ENCODE measurements at regions of chr1 and their contacts with region 1.

Region 1: GRCh38 chr1:45011837-45012638 is at the start of gene UROD:
- DNase-seq: peak; percentile 94
- H3K4me3 Mint-ChIP-seq: peak within 1 kb of the TSS; percentile 79
- H3K27ac Mint-ChIP-seq: peak within 1 kb of the TSS; percentile 92
- H3K4me1 Mint-ChIP-seq: peaks cover 43% of the 10 kb centered on the region
- H3K27me3 Mint-ChIP-seq: no peaks in the 10 kb centered on the region
- total RNA-seq, gene UROD: 66.4 to 70.7 TPM

Region 2: GRCh38 chr1:44985747-44986359 is 26.2 kb before region 1 on chr1:
- CTCF ChIA-PET with region 1: interaction called, 10 read pairs
- POLR2A ChIA-PET with region 1: interaction called, 11 read pairs
- DNase-seq: no peak
- H3K4me3 Mint-ChIP-seq: peak overlapping the region; percentile 97
- H3K27ac Mint-ChIP-seq: peak overlapping the region; percentile 92
- H3K4me1 Mint-ChIP-seq: peaks cover 28% of the 10 kb centered on the region
- H3K27me3 Mint-ChIP-seq: no peaks in the 10 kb centered on the region

Region 3: GRCh38 chr1:45490626-45491486 is 478.8 kb after region 1 on chr1 and contains the start of gene TESK2:
- CTCF ChIA-PET with region 1: interaction called, 18 read pairs
- POLR2A ChIA-PET with region 1: interaction called, 3 read pairs
- DNase-seq: peak; percentile 98
- H3K4me3 Mint-ChIP-seq: no peak within 1 kb of the TSS
- H3K27ac Mint-ChIP-seq: no peak within 1 kb of the TSS
- H3K4me1 Mint-ChIP-seq: peaks cover 13% of the 10 kb centered on the region
- H3K27me3 Mint-ChIP-seq: peaks cover 3% of the 10 kb centered on the region
- total RNA-seq, gene TESK2: 2.6 to 3.5 TPM

Region 4: GRCh38 chr1:45621501-45621836 is 609.4 kb after region 1 on chr1:
- CTCF ChIA-PET with region 1: no interaction called
- POLR2A ChIA-PET with region 1: no interaction called
- DNase-seq: no peak
- H3K4me3 Mint-ChIP-seq: no peak overlapping the region
- H3K27ac Mint-ChIP-seq: peak overlapping the region; percentile 25
- H3K4me1 Mint-ChIP-seq: no peaks in the 10 kb centered on the region
- H3K27me3 Mint-ChIP-seq: no peaks in the 10 kb centered on the region

Measured in activated CD4-positive, alpha-beta T cell treated with anti-CD3 and anti-CD28 coated beads, Interleukin-2, amount 10 ng/mL, durations not matched to agents 7 days and 5 days (primary cell).